Activated CD8-positive, alpha-beta T cell treated with anti-CD3 and anti-CD28 coated beads for 36 hours (primary cell): ENCODE measurements at regions of chr12 and their contacts with region 1.

Region 1: DNA sequence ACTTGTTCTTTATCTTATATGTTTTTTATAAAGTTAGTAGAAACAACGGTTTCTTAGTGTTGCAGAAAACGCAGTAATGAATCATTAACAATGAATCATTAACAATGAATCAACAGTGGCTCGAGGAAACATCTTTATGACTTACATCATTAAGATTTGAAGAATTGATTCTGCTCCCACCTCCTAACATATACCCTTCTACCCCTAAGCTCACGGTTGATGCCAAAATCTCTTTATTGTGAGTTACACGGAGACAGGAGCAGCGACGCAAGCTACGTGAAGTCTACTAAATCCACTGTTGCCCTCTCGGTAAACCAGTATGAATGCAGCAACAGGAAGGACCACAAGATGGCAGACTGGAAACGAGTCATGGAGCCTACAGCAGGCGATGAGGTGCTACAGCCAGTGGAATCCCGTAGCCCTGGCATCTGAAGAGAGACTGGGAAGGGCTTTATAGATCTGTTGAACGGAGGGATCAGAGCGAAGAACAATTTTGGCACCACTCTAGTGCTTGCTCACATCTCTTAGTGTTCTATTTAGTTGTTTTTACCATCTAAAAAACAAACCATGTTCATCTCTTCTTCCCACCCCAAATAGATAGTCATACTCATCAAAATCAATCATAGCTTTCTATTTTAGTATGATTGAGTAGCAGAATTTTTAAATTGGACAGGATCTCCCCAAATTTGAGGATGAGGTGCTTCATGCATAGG is 332.7 kb downstream of the DUSP6 start:
- DNase-seq: peak; percentile 86
- ATAC-seq: peak; percentile 93
- H3K4me3 Mint-ChIP-seq: no peak overlapping the region
- H3K27ac Mint-ChIP-seq: peak overlapping the region; percentile 55
- H3K4me1 Mint-ChIP-seq: peaks cover 13% of the 10 kb centered on the region
- H3K27me3 Mint-ChIP-seq: peaks cover 3% of the 10 kb centered on the region
- CTCF ChIP-seq: peak; percentile 81

Region 2: GRCh38 chr12:89040146-89040964 is 20.8 kb after region 1 on chr12:
- CTCF ChIA-PET with region 1: interaction called, 77 read pairs
- POLR2A ChIA-PET with region 1: interaction called, 6 read pairs
- intact Hi-C with region 1: loop called (anchors 2 kb)
- DNase-seq: peak; percentile 96
- ATAC-seq: peak; percentile 87
- H3K4me3 Mint-ChIP-seq: peak overlapping the region; percentile 43
- H3K27ac Mint-ChIP-seq: peak overlapping the region; percentile 100
- H3K4me1 Mint-ChIP-seq: peaks cover 58% of the 10 kb centered on the region
- H3K27me3 Mint-ChIP-seq: peaks cover 2% of the 10 kb centered on the region
- CTCF ChIP-seq: no peak

Region 3: GRCh38 chr12:89244536-89244935 is 225.0 kb after region 1 on chr12:
- CTCF ChIA-PET with region 1: interaction called, 11 read pairs
- POLR2A ChIA-PET with region 1: no interaction called
- intact Hi-C with region 1: no loop called
- DNase-seq: peak; percentile 45
- ATAC-seq: peak; percentile 86
- H3K4me3 Mint-ChIP-seq: peak overlapping the region; percentile 40
- H3K27ac Mint-ChIP-seq: peak overlapping the region; percentile 83
- H3K4me1 Mint-ChIP-seq: peaks cover 34% of the 10 kb centered on the region
- H3K27me3 Mint-ChIP-seq: peaks cover 3% of the 10 kb centered on the region
- CTCF ChIP-seq: no peak

Region 4: DNA sequence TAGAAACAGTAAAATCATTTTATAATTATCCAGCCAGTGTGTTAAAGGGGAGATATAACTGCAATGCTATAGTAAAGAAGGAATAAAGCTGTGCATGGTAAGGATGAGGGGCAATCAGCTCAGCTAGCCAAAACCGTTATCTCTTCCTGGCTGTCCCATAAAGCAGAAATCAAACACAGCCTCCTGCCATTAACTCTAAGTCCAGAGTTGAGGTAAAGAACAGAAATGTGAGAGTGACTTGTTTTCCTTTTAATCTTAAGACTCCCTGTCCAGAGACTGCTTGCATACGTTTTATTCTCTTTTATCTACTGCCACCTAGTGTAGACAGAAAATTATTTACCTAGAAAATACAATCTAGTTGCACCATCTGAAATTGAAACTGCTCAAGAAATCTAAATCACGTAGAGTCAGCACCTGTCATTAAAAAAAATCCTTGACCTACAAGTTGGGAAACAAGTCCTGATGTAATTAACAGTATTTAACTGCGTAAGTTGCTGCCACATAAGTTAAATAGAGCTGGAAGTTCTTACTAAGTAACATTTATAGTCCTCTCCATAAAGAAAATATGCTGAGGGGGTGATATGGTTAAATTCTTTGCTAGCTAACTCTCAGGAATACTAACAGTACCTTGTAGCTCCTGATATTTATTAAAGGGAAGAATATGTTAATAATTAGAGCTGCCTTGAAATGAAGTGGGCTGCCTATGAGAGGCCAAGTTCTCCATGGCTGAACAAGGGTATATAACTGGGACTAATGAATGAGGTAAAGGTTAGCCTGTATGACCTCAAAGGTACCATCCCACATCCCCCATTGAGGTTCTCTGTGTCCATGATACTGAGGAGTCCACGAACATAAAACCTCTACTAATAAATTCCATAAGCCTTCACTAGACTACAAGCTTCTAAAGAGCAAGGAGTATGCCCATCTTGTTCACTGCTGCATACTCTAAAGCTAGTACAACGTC is 442.4 kb after region 1 on chr12:
- CTCF ChIA-PET with region 1: interaction called, 78 read pairs
- POLR2A ChIA-PET with region 1: interaction called, 4 read pairs
- intact Hi-C with region 1: loop called (anchors 1 kb)
- DNase-seq: no peak
- ATAC-seq: peak; percentile 91
- H3K4me3 Mint-ChIP-seq: peak overlapping the region; percentile 46
- H3K27ac Mint-ChIP-seq: peak overlapping the region; percentile 79
- H3K4me1 Mint-ChIP-seq: peaks cover 32% of the 10 kb centered on the region
- H3K27me3 Mint-ChIP-seq: no peaks in the 10 kb centered on the region
- CTCF ChIP-seq: peak; percentile 76

Region 5: DNA sequence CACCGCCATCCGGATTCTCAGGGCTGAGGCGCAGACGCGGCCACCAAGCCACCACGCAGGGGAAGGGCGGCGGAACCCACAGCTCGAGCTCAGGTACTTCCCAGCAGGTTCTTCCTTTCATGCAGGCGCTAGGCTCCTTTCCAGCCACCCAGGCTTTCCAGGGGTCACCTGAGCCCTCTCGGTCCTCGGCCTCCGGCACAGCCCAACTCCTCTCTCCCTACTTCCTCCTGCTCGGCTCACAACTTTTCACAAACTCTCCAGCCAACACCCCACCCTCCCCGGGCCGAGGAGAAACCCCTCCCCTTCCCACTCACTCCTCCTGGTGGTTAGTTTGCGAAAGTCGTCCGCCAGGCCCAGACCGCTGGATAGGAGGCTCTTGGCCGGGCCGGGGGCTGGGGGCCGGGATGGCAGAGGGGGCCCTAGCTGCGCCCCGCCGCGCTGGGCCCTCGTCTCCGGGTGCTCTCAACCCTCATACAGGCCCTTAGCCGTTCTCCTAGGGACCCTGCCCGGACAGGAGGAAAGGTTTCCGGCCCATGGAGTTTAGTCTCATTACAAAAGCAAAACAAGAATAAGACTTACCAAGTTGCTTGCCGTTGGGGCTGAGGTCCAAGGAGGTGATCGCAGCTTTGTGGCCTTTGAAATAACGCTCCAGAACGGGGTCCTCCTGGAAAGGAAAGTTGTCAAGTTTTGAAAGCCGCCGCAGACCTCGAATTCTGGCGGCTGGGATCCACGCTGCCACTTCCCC is 505.1 kb after region 1 on chr12 and contains the start of gene GALNT4:
- CTCF ChIA-PET with region 1: interaction called, 59 read pairs
- POLR2A ChIA-PET with region 1: no interaction called
- intact Hi-C with region 1: loop called (anchors 2 kb)
- DNase-seq: peak; percentile 80
- ATAC-seq: peak; percentile 59
- H3K4me3 Mint-ChIP-seq: peak within 1 kb of the TSS; percentile 98
- H3K27ac Mint-ChIP-seq: peak within 1 kb of the TSS; percentile 99
- H3K4me1 Mint-ChIP-seq: peaks cover 58% of the 10 kb centered on the region
- H3K27me3 Mint-ChIP-seq: no peaks in the 10 kb centered on the region
- CTCF ChIP-seq: peak; percentile 65
- total RNA-seq, gene GALNT4: 5.9 to 6.4 TPM